Colonic mucosa (tissue), 4 donors: ENCODE measurements at regions of chr1 and their contacts with region 1.

Region 1: GRCh38 chr1:224356685-224357625 is at the start of gene CNIH4:
- DNase-seq: peak; percentile 95
- H3K4me3 ChIP-seq: peak within 1 kb of the TSS; percentile 87
- H3K27ac ChIP-seq: peak within 1 kb of the TSS; percentile 93
- H3K4me1 ChIP-seq: peaks cover 10% of the 10 kb centered on the region
- H3K27me3 ChIP-seq: no peaks in the 10 kb centered on the region
- CTCF ChIP-seq: no peak
- total RNA-seq, gene CNIH4: 53.0 to 80.6 TPM

Region 2: DNA sequence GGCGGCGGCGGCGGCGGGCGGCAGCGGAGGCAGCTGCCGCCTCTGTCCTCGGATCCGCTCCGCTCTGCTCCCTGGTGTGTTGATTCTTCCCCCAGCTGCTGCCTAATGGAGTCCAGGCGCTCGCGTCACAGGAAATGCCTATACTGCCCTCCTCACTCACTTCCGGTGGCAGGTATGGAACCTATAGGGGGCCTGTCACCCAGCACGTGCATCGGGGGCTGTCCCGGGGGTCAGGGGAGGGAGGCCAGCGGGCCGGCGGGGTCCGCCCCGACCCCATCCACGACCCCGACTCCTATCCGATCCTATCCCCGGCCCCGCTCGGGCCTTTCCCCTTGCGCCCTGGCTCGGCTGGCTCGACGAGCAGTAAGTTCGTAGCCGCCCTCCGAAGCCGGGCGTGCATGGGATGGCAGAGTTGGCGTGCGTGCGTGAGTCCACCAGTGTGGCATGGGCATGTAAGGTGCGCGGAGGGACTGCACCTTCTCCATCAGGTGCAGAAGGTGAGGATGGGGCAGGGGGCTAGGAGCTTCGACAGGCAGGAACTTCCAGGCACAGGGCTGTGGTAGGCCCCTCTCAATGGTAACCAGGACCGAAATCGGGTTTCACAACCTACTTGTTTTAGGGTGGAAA is 77.8 kb after region 1 on chr1 and contains the start of gene WDR26:
- intact Hi-C with region 1: loop called (anchors 5 kb)
- DNase-seq: peak; percentile 91
- H3K4me3 ChIP-seq: peak within 1 kb of the TSS; percentile 92
- H3K27ac ChIP-seq: peak within 1 kb of the TSS; percentile 93
- H3K4me1 ChIP-seq: peaks cover 7% of the 10 kb centered on the region
- H3K27me3 ChIP-seq: no peaks in the 10 kb centered on the region
- CTCF ChIP-seq: no peak
- total RNA-seq, gene WDR26: 53.5 to 78.4 TPM